ENCODE measurements at regions of chrX and their contacts with region 1.

Region 1: DNA sequence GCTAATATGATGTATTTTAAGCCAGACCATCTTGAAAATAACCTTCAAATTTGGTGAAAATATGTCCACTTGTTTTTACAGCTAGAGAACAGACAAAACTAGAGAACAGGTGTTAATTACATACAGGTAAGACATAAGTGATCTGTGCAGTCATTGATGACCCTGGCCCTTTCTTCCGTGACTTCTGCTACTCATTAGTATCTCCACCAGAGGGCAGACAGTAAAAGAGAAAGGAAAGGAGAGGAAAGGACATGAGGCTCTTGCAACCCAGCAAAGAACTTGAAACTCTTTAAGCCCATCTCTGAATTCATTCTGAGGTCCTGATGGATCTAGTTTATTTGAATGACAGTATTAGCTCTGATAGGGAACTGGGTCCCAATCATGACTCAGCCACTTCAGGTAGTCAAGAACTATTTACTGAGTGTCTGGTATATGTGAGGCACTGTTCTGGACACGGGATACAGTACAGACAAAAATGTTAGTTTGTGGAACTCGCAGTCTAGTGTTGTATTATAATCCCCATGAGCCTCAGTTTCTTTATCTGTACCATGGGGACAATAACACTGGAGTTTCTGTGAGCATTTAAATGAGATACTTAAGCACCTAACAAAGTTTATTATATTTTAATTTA is 121.0 kb upstream of the TEX13D start:
- DNase-seq: no peak
- H3K4me3 Mint-ChIP-seq: no peak overlapping the region
- H3K27ac Mint-ChIP-seq: no peak overlapping the region
- H3K4me1 Mint-ChIP-seq: peaks cover 40% of the 10 kb centered on the region
- H3K27me3 Mint-ChIP-seq: peaks cover 5% of the 10 kb centered on the region

Region 2: GRCh38 chrX:123788744-123789143 is 422.7 kb before region 1 on chrX:
- intact Hi-C with region 1: no loop called
- DNase-seq: no peak
- H3K4me3 Mint-ChIP-seq: no peak overlapping the region
- H3K27ac Mint-ChIP-seq: no peak overlapping the region
- H3K4me1 Mint-ChIP-seq: no peaks in the 10 kb centered on the region
- H3K27me3 Mint-ChIP-seq: no peaks in the 10 kb centered on the region

Region 3: DNA sequence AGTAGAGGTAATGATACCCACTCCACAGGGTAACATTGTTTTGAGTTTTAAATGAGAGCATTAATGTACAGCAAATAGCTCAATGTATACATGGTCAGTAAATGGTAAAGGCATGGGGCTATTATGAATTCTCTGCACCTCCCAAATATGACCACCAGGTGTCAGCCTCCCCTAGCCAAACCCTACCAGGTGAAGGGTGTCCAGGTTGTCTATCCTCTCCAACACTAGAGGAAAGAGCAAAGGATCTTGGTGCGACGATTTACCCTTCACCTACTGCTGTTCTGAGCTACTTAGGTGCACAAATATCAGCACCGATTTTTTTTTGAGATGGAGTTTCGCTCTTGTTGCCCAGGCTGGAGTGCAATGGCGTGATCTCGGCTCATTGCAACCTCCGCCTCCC is 378.0 kb before region 1 on chrX:
- intact Hi-C with region 1: loop called (anchors 10 kb)
- DNase-seq: peak; percentile 36
- H3K4me3 Mint-ChIP-seq: no peak overlapping the region
- H3K27ac Mint-ChIP-seq: no peak overlapping the region
- H3K4me1 Mint-ChIP-seq: peaks cover 3% of the 10 kb centered on the region
- H3K27me3 Mint-ChIP-seq: peaks cover 8% of the 10 kb centered on the region

Region 4: GRCh38 chrX:124194199-124194598 is 17.2 kb before region 1 on chrX:
- intact Hi-C with region 1: no loop called
- DNase-seq: no peak
- H3K4me3 Mint-ChIP-seq: no peak overlapping the region
- H3K27ac Mint-ChIP-seq: no peak overlapping the region
- H3K4me1 Mint-ChIP-seq: no peaks in the 10 kb centered on the region
- H3K27me3 Mint-ChIP-seq: no peaks in the 10 kb centered on the region